Psoas muscle (tissue), 8 donors: ENCODE measurements at regions of chr6 and their contacts with region 1.

Region 1: DNA sequence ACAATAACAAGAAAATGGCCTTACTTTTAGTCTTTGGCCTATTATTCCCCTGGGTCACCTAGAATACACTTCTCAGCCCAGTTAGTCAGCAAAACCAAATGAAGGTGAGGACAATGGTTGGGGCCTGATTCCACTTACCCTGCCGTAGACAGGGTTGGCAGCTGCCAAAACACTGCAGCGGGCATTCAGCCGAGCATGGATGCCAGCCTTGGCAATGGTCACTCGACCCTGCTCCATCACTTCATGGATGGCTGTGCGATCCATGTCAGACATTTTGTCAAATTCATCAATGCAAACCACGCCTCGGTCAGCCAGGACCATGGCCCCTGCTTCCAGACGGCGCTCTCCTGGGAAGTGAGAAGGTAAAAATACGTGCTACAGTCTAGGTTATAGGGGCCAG is 8.4 kb downstream of the MCM3 start:
- DNase-seq: no peak
- ATAC-seq: no peak
- H3K4me3 ChIP-seq: no peak overlapping the region
- H3K27ac ChIP-seq: no peak overlapping the region
- H3K4me1 ChIP-seq: no peaks in the 10 kb centered on the region
- H3K27me3 ChIP-seq: no peaks in the 10 kb centered on the region
- CTCF ChIP-seq: no peak

Region 2: DNA sequence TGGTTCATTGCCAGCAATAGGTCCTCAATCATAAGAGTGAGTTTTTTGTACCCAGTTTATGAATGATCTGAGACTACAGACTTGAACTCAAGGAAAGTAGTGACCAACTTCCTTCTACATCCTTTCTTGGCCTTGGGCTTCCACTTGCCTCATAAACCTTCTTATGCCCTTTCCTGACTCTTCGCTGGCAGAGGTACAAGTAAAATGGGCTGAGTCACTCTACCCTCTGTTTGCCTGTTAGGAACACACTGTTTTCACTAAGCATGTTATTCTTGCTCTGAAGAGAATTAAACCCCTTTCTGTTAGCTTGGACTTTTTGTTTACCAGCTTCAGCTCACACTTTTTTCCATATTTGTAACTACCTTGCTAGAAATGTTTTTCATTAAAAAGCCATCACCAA is 263.1 kb before region 1 on chr6:
- intact Hi-C with region 1: no loop called
- DNase-seq: no peak
- ATAC-seq: no peak
- H3K4me3 ChIP-seq: no peak overlapping the region
- H3K27ac ChIP-seq: no peak overlapping the region
- H3K4me1 ChIP-seq: no peaks in the 10 kb centered on the region
- H3K27me3 ChIP-seq: peaks cover 0 to 3% (median 0%) of the 10 kb centered on the region in 3 donors
- CTCF ChIP-seq: no peak

Region 3: DNA sequence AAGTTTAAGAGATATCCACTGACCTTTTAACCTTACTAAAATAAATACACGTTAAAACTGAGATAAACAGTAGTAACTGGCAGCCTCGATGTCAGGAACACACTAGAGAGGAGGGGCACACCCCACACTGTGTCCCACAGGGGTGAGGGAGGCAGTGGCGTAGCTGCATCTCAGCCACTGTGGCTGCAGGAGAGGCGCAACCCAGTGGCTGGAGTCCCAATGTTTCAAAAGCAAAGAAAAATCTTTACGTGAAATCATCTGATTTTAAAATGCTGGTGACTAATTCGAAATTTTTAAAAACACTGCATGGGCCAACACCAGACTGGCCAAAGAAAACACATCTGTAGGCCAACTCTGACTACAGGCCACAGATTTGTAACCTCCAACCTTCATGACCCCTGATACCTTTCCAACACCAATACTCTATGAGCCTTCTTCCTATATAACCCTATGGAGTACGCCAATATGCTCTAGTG is 246.1 kb after region 1 on chr6:
- intact Hi-C with region 1: no loop called
- DNase-seq: peak; percentile 67 to 79
- ATAC-seq: peak in 2 of 4 donors; percentile 34 to 35
- H3K4me3 ChIP-seq: no peak overlapping the region
- H3K27ac ChIP-seq: peak overlapping the region; percentile 56
- H3K4me1 ChIP-seq: peaks cover 18% of the 10 kb centered on the region
- H3K27me3 ChIP-seq: no peaks in the 10 kb centered on the region
- CTCF ChIP-seq: no peak

Region 4: DNA sequence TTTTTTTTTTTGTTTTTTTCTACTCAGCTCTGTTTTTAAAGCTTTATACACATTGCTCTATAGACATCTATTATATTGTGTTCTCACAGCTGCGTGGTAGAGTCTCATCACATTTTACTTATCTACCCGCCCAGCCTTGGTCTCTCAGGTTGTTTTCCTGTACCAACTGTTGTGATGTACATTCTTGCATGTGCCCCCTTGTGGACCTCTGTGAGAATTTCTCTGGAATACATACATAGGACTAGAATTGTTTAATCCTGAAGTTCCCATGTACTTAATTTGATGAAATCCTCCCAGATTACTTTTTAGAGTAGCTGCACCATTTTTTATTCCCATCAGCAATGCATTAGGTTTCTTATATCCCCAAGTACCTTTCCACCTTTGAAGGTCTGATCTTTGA is 1991.7 kb after region 1 on chr6:
- intact Hi-C with region 1: loop called in 1 of 2 experiments (anchors 5 kb)
- DNase-seq: no peak
- ATAC-seq: peak in 2 of 4 donors; percentile 23 to 30
- H3K4me3 ChIP-seq: no peak overlapping the region
- H3K27ac ChIP-seq: no peak overlapping the region
- H3K4me1 ChIP-seq: peaks cover 13% of the 10 kb centered on the region
- H3K27me3 ChIP-seq: no peaks in the 10 kb centered on the region
- CTCF ChIP-seq: no peak